Naive thymus-derived CD8-positive, alpha-beta T cell (primary cell): ENCODE measurements at regions of chr9 and their contacts with region 1.

Region 1: GRCh38 chr9:112002131-112002846 is 105.7 kb downstream of the UGCG start:
- DNase-seq: peak in 8 of 10 donors; percentile 1 to 65 (median 28)
- ATAC-seq: peak; percentile 88 to 93
- H3K4me3 Mint-ChIP-seq: peak overlapping the region in 9 of 10 donors; percentile 22 to 72 (median 55)
- H3K27ac Mint-ChIP-seq: peak overlapping the region in 9 of 10 donors; percentile 26 to 83 (median 71)
- H3K4me1 Mint-ChIP-seq: peaks cover 14 to 38% (median 31%) of the 10 kb centered on the region in 4 donors
- H3K27me3 Mint-ChIP-seq: no peaks in the 10 kb centered on the region

Region 2: GRCh38 chr9:111985315-111985714 is 17.0 kb before region 1 on chr9:
- POLR2A ChIA-PET with region 1: interaction called, 13 read pairs
- DNase-seq: no peak
- ATAC-seq: no peak
- H3K4me3 Mint-ChIP-seq: peak overlapping the region in 6 of 10 donors; percentile 5 to 53 (median 28)
- H3K27ac Mint-ChIP-seq: peak overlapping the region in 3 of 10 donors; percentile 13 to 74 (median 35)
- H3K4me1 Mint-ChIP-seq: peaks cover 18 to 52% (median 45%) of the 10 kb centered on the region in 4 donors
- H3K27me3 Mint-ChIP-seq: no peaks in the 10 kb centered on the region